Tibial artery (tissue), 4 donors: ENCODE measurements at regions of chr12 and their contacts with region 1.

Region 1: DNA sequence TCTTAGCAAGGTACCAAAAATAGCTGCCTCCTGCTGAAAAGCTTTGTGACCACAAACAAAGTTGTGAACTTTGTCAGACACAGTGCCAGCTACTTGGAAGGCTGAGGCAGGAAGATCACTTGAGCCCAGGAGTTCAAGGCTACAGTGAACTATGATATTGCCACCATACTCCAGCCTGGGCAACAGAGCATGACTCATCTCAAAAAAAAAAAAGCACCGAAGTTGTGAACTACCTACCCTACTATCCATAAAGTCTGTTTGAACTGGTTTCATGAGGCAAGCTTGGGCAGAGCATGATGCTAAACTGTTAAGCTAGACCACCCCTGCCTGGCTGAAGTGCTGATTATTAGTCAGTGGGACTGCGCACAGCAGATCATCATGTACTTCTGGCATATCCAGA is 75.5 kb downstream of the RAD52 start:
- DNase-seq: no peak
- H3K4me3 ChIP-seq: no peak overlapping the region
- H3K27ac ChIP-seq: no peak overlapping the region
- H3K4me1 ChIP-seq: no peaks in the 10 kb centered on the region
- H3K27me3 ChIP-seq: no peaks in the 10 kb centered on the region
- CTCF ChIP-seq: no peak

Region 2: GRCh38 chr12:894226-894625 is 20.3 kb after region 1 on chr12:
- intact Hi-C with region 1: loop called (anchors 1 kb)
- DNase-seq: no peak
- H3K4me3 ChIP-seq: no peak overlapping the region
- H3K27ac ChIP-seq: no peak overlapping the region
- H3K4me1 ChIP-seq: peaks cover 0 to 15% (median 0%) of the 10 kb centered on the region in 4 donors
- H3K27me3 ChIP-seq: no peaks in the 10 kb centered on the region
- CTCF ChIP-seq: no peak

Region 3: GRCh38 chr12:981176-981828 is 107.3 kb after region 1 on chr12:
- intact Hi-C with region 1: no loop called
- DNase-seq: no peak
- H3K4me3 ChIP-seq: no peak overlapping the region
- H3K27ac ChIP-seq: no peak overlapping the region
- H3K4me1 ChIP-seq: no peaks in the 10 kb centered on the region
- H3K27me3 ChIP-seq: no peaks in the 10 kb centered on the region
- CTCF ChIP-seq: no peak